H1 (cell line): ENCODE measurements at regions of chr5 and their contacts with region 1.

Region 1: GRCh38 chr5:66306105-66306843 is 162.2 kb downstream of the SREK1 start:
- DNase-seq: peak; percentile 34 to 57
- H3K4me3 ChIP-seq: no peak overlapping the region
- H3K27ac ChIP-seq: no peak overlapping the region
- H3K4me1 ChIP-seq: no peaks in the 10 kb centered on the region
- H3K27me3 ChIP-seq: no peaks in the 10 kb centered on the region
- CTCF ChIP-seq: peak; percentile 56 to 86 (median 85)
- EP300 ChIP-seq: no peak
- POLR2A ChIP-seq: no peak
- RAD21 ChIP-seq: peak; percentile 76 to 87

Region 2: DNA sequence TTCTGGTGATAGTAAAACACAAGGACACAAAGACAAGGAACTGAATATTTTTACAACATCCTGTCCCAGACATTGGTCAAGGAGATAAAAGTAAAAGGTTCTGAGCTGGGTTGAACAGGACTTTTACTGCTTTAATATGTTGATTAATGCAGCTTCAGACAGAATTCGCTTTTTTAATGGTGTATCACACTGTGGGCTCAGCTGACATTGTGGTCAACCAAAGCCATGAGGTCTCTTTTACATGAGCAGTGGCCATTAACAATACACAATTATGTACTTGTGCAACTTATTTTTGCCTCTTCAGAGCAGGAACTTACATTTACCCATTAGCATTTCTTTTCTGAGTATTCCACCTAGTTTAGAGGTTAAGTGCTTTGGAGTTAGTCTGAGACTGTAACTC is 402.7 kb before region 1 on chr5:
- CTCF ChIA-PET with region 1: no interaction called
- POLR2A ChIA-PET with region 1: no interaction called
- DNase-seq: no peak
- H3K4me3 ChIP-seq: no peak overlapping the region
- H3K27ac ChIP-seq: no peak overlapping the region
- H3K4me1 ChIP-seq: no peaks in the 10 kb centered on the region
- H3K27me3 ChIP-seq: no peaks in the 10 kb centered on the region
- CTCF ChIP-seq: no peak
- EP300 ChIP-seq: no peak
- POLR2A ChIP-seq: no peak
- RAD21 ChIP-seq: no peak

Region 3: DNA sequence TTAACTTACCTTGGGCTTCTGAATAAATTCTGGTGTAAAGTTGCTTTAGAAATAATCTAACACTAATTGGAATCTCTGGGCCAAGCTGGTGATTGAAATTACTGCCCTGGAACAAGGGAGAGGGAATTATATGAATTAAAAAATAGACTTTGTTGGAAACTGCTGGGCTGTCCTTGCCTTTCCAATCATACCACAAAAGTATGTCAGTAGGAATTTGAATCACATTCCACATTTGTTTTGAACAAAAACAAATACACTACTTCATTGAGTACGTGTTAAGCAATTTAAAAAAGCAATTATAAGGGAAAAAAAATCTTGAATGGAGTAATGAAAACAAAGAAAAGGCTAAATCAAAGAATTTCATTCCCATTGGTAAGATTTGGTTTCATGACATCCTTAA is 264.6 kb before region 1 on chr5:
- CTCF ChIA-PET with region 1: no interaction called
- POLR2A ChIA-PET with region 1: no interaction called
- DNase-seq: no peak
- H3K4me3 ChIP-seq: no peak overlapping the region
- H3K27ac ChIP-seq: no peak overlapping the region
- H3K4me1 ChIP-seq: no peaks in the 10 kb centered on the region
- H3K27me3 ChIP-seq: peaks cover 0 to 1% (median 0%) of the 10 kb centered on the region in 4 experiments; a peak in 1 of 7 replicates
- CTCF ChIP-seq: no peak
- EP300 ChIP-seq: no peak
- POLR2A ChIP-seq: no peak
- RAD21 ChIP-seq: no peak

Region 4: DNA sequence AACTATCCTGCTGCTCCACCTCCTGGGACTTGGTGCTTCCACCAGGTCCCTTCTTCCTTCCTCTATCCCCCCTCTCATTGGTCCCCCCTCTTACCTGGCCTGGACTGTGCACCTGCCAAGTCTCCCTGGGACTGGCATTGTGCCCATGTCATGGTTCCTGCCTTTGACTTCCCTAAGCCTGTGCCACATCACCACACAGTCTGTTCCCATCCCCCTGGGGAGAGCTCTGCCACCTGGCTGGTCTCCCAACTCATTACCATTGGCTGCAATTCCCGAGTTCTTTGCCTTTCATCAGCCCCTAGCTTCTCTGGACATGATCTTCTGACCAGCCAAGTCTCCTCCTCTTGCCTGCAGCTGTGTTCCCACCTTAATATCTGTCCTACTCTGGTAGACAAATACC is 18.1 kb after region 1 on chr5:
- CTCF ChIA-PET with region 1: interaction called, 96 read pairs
- POLR2A ChIA-PET with region 1: no interaction called
- DNase-seq: no peak
- H3K4me3 ChIP-seq: no peak overlapping the region
- H3K27ac ChIP-seq: no peak overlapping the region
- H3K4me1 ChIP-seq: no peaks in the 10 kb centered on the region
- H3K27me3 ChIP-seq: no peaks in the 10 kb centered on the region
- CTCF ChIP-seq: no peak
- EP300 ChIP-seq: no peak
- POLR2A ChIP-seq: no peak
- RAD21 ChIP-seq: no peak

Region 5: DNA sequence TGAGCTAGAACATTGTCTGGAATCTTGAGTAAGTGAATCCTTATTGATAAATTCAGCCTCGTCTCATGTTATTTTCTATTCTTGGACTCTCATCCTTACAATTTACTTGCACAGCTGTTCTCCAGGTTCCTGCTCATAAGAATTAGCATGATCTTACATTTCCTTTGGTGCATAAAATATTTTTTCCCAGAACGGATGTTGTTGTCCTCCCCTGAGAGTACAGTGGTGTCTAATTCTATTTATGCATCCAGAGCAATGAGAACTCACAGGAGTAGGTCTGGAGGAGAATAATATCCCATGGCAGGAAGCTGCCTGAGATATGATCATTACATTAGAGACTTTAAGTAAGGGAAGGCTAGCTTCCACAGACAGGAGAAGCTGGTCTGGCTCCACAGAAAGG is 111.5 kb after region 1 on chr5:
- CTCF ChIA-PET with region 1: interaction called, 12 read pairs
- POLR2A ChIA-PET with region 1: no interaction called
- DNase-seq: no peak
- H3K4me3 ChIP-seq: no peak overlapping the region
- H3K27ac ChIP-seq: no peak overlapping the region
- H3K4me1 ChIP-seq: no peaks in the 10 kb centered on the region
- H3K27me3 ChIP-seq: no peaks in the 10 kb centered on the region
- CTCF ChIP-seq: no peak
- EP300 ChIP-seq: no peak
- POLR2A ChIP-seq: no peak
- RAD21 ChIP-seq: no peak

Region 6: DNA sequence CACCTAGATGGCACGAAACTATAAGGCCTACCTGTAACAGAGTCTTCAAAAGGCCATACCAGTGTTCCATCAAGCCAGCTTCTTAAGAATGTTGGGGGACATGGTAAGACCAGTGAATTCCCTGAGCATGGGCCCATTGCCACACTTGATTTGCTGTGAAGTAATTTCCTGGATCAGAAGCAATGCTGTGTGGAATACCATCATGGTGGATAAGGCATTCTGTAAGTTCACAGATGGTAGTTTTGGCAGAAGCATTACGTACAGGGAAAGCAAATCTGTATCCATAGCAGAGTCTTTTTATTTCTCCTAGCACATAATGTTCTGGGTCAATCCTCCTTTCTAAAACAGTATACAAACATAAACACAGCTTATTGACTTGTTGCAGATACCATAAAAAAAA is 200.8 kb after region 1 on chr5:
- CTCF ChIA-PET with region 1: interaction called, 35 read pairs
- POLR2A ChIA-PET with region 1: no interaction called
- DNase-seq: no peak
- H3K4me3 ChIP-seq: no peak overlapping the region
- H3K27ac ChIP-seq: no peak overlapping the region
- H3K4me1 ChIP-seq: no peaks in the 10 kb centered on the region
- H3K27me3 ChIP-seq: no peaks in the 10 kb centered on the region
- CTCF ChIP-seq: no peak
- EP300 ChIP-seq: no peak
- POLR2A ChIP-seq: no peak
- RAD21 ChIP-seq: no peak

Region 7: DNA sequence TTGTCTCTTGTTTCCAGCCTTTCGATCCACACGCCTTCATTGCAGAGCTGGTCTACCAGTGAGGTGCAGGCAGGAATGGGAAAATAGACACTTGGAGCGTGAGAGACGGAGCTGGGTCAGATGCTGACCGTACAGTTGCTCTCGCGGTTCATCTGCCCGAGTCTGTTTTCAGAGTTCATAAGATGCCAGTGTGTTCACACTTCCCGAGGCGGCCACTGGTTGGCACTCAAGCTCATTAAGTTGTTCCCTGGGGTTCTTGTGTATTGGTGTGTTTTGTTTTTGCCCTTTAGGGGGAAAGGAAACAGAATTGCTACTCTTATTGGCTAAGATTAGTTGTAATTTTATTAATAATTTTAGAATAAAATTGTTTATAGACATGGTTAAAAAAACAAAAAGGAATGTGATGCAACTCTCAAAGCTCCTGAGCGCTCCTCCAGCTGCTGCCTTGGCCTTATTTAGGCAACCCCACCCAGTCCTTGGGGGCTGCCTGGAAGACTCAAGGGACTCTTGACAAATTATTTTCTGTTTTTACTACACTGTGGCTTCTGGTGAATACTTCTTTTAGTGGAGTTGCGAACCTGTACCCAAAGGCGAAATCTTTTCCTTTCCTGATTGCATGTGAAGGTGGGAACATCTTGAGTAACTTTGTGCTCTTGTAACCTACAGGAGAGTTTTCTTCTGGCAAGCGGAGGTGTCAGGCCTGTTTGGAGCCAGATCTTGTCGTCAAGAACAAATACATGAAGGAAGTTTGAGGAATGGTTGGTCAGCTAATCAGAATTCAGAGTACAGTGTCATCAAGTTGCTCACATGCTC is 436.0 kb after region 1 on chr5:
- CTCF ChIA-PET with region 1: interaction called, 15 read pairs
- POLR2A ChIA-PET with region 1: no interaction called
- DNase-seq: no peak
- H3K4me3 ChIP-seq: no peak overlapping the region
- H3K27ac ChIP-seq: no peak overlapping the region
- H3K4me1 ChIP-seq: no peaks in the 10 kb centered on the region
- H3K27me3 ChIP-seq: no peaks in the 10 kb centered on the region
- CTCF ChIP-seq: peak; percentile 59 to 66 (median 60)
- EP300 ChIP-seq: no peak
- POLR2A ChIP-seq: no peak
- RAD21 ChIP-seq: peak; percentile 51 to 57; a peak in 3 of 4 replicates